ENCODE measurements at regions of chr17 and their contacts with region 1.

Region 1: DNA sequence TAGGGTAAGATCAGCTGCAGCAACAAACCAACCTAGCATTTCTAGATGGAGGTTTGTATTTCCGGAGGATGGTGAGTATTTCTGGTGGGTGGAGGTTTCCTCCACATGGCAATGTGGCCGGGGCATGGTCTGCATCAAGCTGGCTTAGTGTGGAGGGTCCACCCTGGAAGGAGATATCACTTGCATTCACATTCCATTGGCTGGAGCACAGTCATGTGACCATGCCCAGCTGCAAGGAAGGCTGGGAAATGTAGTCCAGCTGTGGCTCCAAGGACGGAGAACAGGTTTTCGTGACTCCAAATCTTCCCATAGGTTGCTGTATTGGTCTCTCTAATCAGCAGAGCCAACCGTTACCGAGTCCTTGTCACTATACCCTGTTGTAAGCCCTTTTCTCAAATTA is 68.7 kb downstream of the RAI1 start:
- DNase-seq: peak in 4 of 6 donors; percentile 57 to 72 (median 62)
- ATAC-seq: peak in 3 of 4 donors; percentile 29 to 50 (median 44)
- H3K4me3 ChIP-seq: no peak overlapping the region
- H3K27ac ChIP-seq: peak overlapping the region in 2 of 4 donors; percentile 33 to 35
- H3K4me1 ChIP-seq: peaks cover 0 to 11% (median 6%) of the 10 kb centered on the region in 3 donors
- H3K27me3 ChIP-seq: no peaks in the 10 kb centered on the region
- CTCF ChIP-seq: no peak

Region 2: GRCh38 chr17:17694169-17695081 is 55.5 kb before region 1 on chr17:
- intact Hi-C with region 1: loop called in 1 of 3 experiments (anchors 10 kb)
- DNase-seq: peak; percentile 66 to 88 (median 72)
- ATAC-seq: peak; percentile 61 to 77 (median 68)
- H3K4me3 ChIP-seq: peak overlapping the region; percentile 58 to 79 (median 70)
- H3K27ac ChIP-seq: peak overlapping the region; percentile 94 to 98 (median 96)
- H3K4me1 ChIP-seq: peaks cover 28 to 47% (median 30%) of the 10 kb centered on the region in 3 donors
- H3K27me3 ChIP-seq: no peaks in the 10 kb centered on the region
- CTCF ChIP-seq: no peak